HCT116 (cell line): ENCODE measurements at regions of chr17 and their contacts with region 1.

Region 1: DNA sequence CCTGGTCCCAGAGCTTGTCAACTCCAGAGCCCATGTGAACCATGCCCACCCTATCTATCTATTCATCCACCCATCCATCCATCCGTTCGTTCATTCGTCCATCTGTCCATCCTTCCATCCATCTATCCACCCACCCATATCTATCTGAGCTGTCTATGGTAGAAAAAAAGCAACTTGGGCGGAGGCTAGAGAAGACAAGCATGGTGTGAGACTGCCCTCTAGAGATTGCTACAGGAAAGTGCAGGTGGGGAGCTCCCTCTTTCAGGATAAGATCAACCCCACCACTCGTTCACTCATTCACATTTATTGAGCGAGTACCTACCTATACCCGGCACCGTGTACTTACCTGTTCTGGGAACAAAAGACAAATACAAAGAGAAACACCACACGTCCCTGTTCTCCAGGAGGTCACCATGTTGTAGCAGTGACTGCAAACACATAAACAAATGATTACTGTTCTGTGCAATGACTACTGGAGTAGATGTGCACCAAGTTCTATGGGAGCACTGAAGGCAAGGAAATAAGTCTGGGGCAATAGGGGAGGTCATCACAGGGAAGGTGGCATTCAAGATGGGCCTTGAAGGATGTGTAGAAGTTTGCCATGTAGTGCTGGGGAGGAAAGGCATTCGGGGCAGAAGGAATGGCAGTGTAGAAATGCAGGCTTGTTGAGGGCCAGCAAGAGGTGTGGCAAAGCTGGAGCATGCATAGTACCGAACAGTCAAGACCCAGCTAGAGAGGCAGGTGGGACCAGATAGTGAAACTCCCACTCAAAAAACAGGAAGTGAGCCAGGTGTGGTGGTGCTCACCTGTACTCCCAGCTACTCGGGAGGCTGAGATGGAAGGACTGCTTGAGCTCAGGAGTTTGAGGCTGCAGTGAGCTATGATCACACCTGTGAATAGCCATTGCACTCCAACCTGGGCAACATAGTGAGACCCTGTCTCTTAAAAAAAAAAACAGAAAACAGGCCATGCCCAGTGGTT is 13.4 kb upstream of the ATP5MC1 start:
- DNase-seq: peak; percentile 82
- ATAC-seq: peak; percentile 93
- H3K4me3 ChIP-seq: no peak overlapping the region
- H3K27ac ChIP-seq: no peak overlapping the region
- H3K4me1 ChIP-seq: peaks cover 0 to 2% of the 10 kb centered on the region in 2 experiments; a peak in 1 of 4 replicates
- H3K27me3 ChIP-seq: no peaks in the 10 kb centered on the region
- CTCF ChIP-seq: peak; percentile 97 to 100 (median 99)
- POLR2A ChIP-seq: no peak
- RAD21 ChIP-seq: peak; percentile 100

Region 2: DNA sequence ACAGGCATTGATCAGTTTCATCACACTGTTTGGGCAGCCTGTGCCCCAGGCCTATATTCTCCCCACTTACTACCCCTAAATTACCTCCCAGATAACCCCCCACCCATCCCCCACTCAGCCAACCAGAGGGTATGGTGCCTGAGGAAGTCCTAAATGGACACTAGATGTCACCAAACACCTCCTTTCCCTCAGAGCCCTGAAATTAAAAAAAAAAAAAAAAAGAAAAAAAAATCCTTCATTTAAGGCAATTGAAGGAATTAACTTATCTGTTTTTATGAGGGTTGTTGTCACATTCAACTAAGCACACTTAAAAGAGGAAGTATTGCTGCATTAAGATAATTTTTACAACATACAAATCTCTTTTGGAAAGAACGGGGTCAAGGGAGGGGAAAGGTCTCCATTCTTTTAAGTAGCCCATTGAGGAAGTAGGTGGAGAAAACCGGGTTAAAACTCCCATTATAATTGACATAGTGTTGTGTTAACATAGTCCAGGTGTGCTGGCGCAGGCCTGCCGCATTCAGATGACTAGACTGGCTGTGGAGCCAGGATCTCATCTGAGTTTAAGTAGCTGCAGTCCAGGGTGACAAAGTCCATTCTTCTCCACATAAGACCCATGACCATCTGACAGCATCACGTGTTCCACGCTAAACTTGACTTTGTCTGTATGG is 725.4 kb before region 1 on chr17:
- CTCF ChIA-PET with region 1: interaction called, 4 read pairs
- POLR2A ChIA-PET with region 1: no interaction called
- RAD21 ChIA-PET with region 1: no interaction called
- intact Hi-C with region 1: loop called (anchors 10 kb)
- DNase-seq: peak; percentile 45
- ATAC-seq: peak; percentile 95
- H3K4me3 ChIP-seq: no peak overlapping the region
- H3K27ac ChIP-seq: no peak overlapping the region
- H3K4me1 ChIP-seq: peaks cover 3 to 6% of the 10 kb centered on the region in 2 experiments; a peak in 3 of 4 replicates
- H3K27me3 ChIP-seq: peaks cover 25% of the 10 kb centered on the region; the same call in 1 of the 2 replicates
- CTCF ChIP-seq: peak; percentile 80 to 87 (median 83)
- POLR2A ChIP-seq: no peak
- RAD21 ChIP-seq: peak; percentile 86

Region 3: DNA sequence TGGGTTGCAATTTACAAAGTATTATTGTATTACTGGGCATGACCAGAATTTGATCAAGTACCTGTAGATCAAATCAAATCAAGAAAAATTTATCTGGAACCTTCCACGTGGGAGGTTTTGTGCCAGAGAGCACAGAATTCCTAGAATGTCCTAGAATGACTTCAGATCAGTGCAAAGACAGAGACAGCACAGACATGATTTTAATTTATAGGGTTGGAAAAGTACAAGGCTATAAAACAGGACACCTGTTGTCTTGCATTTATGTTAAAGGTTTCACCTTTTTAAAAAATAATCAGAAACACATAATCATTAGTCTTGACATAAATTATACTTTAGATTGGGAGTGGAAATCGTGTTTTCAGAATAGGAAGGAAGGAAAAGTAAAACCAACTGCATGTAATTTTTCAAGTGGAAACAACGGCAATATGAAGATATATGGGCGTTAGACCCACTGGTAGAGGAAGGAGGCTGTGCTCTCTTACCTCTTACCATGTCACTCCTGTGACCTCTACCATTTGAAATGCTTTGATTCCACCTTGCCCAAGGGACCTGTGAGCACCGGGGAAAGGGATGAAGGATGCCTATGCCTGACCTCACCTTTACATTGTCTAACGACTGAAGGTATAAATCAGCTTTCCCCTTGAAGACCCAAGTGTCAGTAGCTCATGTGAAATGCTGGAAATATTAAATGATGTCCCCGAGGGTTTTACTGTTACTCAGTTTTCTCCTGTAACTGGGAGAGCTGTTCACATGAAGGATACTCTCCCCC is 671.2 kb before region 1 on chr17:
- CTCF ChIA-PET with region 1: no interaction called
- POLR2A ChIA-PET with region 1: no interaction called
- RAD21 ChIA-PET with region 1: no interaction called
- intact Hi-C with region 1: no loop called
- DNase-seq: no peak
- ATAC-seq: no peak
- H3K4me3 ChIP-seq: no peak overlapping the region
- H3K27ac ChIP-seq: peak overlapping the region; percentile 48; the same call in 1 of the 2 replicates
- H3K4me1 ChIP-seq: peaks cover 8 to 36% of the 10 kb centered on the region in 2 experiments; a peak in 3 of 4 replicates
- H3K27me3 ChIP-seq: no peaks in the 10 kb centered on the region
- CTCF ChIP-seq: no peak
- POLR2A ChIP-seq: no peak
- RAD21 ChIP-seq: no peak

Region 4: GRCh38 chr17:48478224-48479013 is 400.8 kb before region 1 on chr17:
- CTCF ChIA-PET with region 1: no interaction called
- POLR2A ChIA-PET with region 1: no interaction called
- RAD21 ChIA-PET with region 1: no interaction called
- intact Hi-C with region 1: no loop called
- DNase-seq: no peak
- ATAC-seq: no peak
- H3K4me3 ChIP-seq: no peak overlapping the region
- H3K27ac ChIP-seq: no peak overlapping the region
- H3K4me1 ChIP-seq: peaks cover 22 to 39% of the 10 kb centered on the region in 2 experiments
- H3K27me3 ChIP-seq: no peaks in the 10 kb centered on the region
- CTCF ChIP-seq: no peak
- POLR2A ChIP-seq: no peak
- RAD21 ChIP-seq: no peak

Region 5: GRCh38 chr17:48678141-48678971 is 200.9 kb before region 1 on chr17:
- CTCF ChIA-PET with region 1: interaction called, 221 read pairs
- POLR2A ChIA-PET with region 1: interaction called, 3 read pairs
- RAD21 ChIA-PET with region 1: interaction called, 28 to 29 read pairs
- intact Hi-C with region 1: loop called (anchors 2 kb)
- DNase-seq: peak; percentile 28
- ATAC-seq: peak; percentile 97
- H3K4me3 ChIP-seq: peak overlapping the region; percentile 12 to 26; a peak in 2 of 4 replicates
- H3K27ac ChIP-seq: peak overlapping the region; percentile 12; the same call in 1 of the 2 replicates
- H3K4me1 ChIP-seq: peaks cover 0 to 13% of the 10 kb centered on the region in 2 experiments; a peak in 2 of 4 replicates
- H3K27me3 ChIP-seq: no peaks in the 10 kb centered on the region
- CTCF ChIP-seq: peak; percentile 99 to 100 (median 99)
- POLR2A ChIP-seq: no peak
- RAD21 ChIP-seq: peak; percentile 98

Region 6: DNA sequence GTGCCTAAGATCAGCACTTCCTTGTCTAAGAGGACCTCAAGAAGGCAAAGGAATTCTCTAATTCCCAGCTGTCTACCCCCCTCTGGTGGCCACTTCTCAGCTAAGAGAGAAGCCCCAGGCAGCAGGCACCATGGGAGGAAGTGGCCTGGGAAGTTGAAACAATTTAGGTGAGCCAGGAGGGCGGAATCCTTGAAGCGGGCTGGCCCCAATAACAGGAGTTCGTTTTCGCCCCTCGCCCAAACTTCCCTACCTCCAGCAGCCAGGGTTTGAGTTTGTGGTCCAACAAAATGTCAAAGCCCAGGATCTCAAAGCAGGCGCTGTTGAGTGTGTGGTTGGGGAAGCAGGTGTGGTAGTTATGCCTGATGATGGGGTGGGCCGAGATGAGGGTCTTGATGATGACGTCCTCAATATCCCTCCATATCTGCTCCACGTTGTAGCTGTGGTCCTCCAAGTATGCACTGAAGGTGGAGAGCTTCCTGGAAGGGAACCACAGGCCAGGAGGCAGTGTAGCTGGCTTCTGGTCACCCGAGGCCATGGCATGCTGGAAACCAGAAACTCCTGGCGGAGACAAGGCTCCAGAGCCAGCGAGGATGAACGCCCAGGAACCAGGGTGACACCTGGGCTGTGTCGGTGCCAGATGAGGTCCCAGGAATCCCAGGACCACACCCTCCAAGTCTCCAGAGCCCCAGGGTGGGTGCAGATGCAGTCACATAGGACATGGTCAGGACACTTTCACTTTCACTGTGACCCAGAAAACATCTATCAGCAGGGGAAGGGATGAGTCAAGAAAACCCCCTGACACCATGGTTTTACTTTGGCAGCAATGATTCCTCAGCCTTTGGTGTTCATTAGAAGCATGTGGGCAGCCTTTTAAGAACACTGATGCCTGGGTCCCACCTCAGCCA is 87.8 kb before region 1 on chr17:
- CTCF ChIA-PET with region 1: interaction called, 14 read pairs
- POLR2A ChIA-PET with region 1: no interaction called
- RAD21 ChIA-PET with region 1: interaction called, 5 read pairs
- intact Hi-C with region 1: no loop called
- DNase-seq: peak; percentile 87
- ATAC-seq: peak; percentile 92
- H3K4me3 ChIP-seq: no peak overlapping the region
- H3K27ac ChIP-seq: no peak overlapping the region
- H3K4me1 ChIP-seq: peaks cover 12 to 32% of the 10 kb centered on the region in 2 experiments
- H3K27me3 ChIP-seq: no peaks in the 10 kb centered on the region
- CTCF ChIP-seq: peak; percentile 94 to 98 (median 98)
- POLR2A ChIP-seq: no peak
- RAD21 ChIP-seq: peak; percentile 97

Region 7: GRCh38 chr17:48816774-48817590 is 62.2 kb before region 1 on chr17 and contains the start of gene TTLL6:
- CTCF ChIA-PET with region 1: interaction called, 237 read pairs
- POLR2A ChIA-PET with region 1: interaction called, 6 read pairs
- RAD21 ChIA-PET with region 1: interaction called, 14 to 40 read pairs
- intact Hi-C with region 1: loop called (anchors 1 kb)
- DNase-seq: peak; percentile 89
- ATAC-seq: peak; percentile 98
- H3K4me3 ChIP-seq: peak within 1 kb of the TSS; percentile 41 to 59
- H3K27ac ChIP-seq: no peak within 1 kb of the TSS; the same call in 1 of the 2 replicates
- H3K4me1 ChIP-seq: peaks cover 9 to 17% of the 10 kb centered on the region in 2 experiments
- H3K27me3 ChIP-seq: no peaks in the 10 kb centered on the region
- CTCF ChIP-seq: no peak
- POLR2A ChIP-seq: no peak
- RAD21 ChIP-seq: no peak
- total RNA-seq, gene TTLL6: 0.79 TPM

Region 8: DNA sequence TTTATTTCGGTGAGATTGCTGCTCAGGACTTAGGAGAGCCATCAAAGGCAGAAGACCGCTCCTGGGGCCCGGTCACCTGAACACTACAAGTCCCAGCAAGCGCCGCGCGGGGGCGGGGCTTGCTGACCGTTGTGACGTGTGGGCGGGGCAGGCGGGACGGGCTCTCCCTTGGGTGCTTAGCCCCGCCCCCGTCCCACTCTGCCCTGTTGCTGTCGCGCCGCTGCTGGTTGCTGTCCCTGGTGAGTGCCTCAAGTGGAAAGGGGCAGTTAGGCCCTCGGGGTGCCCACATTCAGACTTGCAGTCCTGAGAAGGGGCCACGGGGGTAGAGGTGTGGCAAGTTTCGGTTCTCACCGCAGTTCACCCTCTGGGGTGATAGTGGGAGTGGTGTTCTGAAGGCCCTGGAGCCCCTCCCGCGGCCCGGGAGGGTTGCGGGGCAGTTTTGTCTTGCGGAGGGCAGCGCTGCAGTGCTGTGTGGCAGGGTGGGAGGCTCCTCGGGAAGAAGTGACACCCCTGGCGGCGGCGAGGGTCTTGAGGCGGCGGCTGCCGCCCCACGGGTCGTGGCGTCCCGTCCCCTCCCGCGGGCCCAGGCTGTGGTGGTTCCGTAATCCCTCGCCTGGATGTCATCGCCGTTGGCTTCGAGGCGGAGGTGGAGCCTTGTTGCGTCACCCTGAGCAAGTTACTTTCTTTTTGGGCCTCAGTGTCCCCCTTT is 48.2 kb before region 1 on chr17 and contains the start of gene CALCOCO2:
- CTCF ChIA-PET with region 1: interaction called, 10 read pairs
- POLR2A ChIA-PET with region 1: no interaction called
- RAD21 ChIA-PET with region 1: no interaction called
- intact Hi-C with region 1: no loop called
- DNase-seq: peak; percentile 94
- ATAC-seq: peak; percentile 98
- H3K4me3 ChIP-seq: peak within 1 kb of the TSS; percentile 85 to 91
- H3K27ac ChIP-seq: peak within 1 kb of the TSS; percentile 66
- H3K4me1 ChIP-seq: peaks cover 5 to 32% of the 10 kb centered on the region in 2 experiments; a peak in 2 of 4 replicates
- H3K27me3 ChIP-seq: no peaks in the 10 kb centered on the region
- CTCF ChIP-seq: peak in 2 of 3 experiments; percentile 9 to 11; a peak in 1 of 6 replicates
- POLR2A ChIP-seq: peak; percentile 74
- RAD21 ChIP-seq: no peak
- total RNA-seq, gene CALCOCO2: 151 TPM

Region 9: DNA sequence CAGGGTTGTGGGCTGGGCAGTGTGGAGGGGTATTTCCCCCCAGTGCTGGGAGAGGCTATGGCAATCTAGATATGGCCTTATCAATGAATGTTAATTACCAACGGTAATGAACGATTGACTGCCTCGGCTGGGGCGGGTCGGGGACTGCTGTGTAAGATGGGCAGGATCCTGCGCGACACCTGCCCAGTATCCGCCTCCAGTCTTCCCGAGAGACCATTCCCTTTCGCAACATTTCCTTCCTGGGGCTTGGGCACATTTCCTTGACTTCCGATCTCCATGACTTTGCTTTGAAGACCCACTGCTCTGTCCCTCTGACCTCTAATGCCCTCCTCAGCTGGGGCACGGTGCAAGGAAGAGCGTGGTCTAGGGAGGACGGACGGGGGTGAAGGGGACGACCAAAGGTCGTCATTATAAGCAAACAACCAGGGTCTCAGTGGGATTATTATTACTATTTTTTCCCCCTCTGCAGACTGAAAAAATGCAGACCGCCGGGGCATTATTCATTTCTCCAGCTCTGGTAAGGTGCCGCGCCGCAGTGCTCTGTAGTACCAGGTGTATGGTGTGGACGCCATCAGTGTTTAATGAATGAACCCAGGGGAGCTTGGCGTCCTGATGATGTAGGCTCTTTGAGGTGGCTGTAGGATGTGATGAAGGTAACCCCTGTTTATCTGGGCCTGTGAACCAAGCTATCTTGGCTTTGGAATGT is 13.9 kb after region 1 on chr17:
- CTCF ChIA-PET with region 1: interaction called, 23 read pairs
- POLR2A ChIA-PET with region 1: interaction called, 10 read pairs
- RAD21 ChIA-PET with region 1: interaction called in 1 of 2 experiments, 3 read pairs
- intact Hi-C with region 1: no loop called
- DNase-seq: no peak
- ATAC-seq: no peak
- H3K4me3 ChIP-seq: peak overlapping the region; percentile 82 to 88
- H3K27ac ChIP-seq: peak overlapping the region; percentile 73
- H3K4me1 ChIP-seq: peaks cover 11 to 26% of the 10 kb centered on the region in 2 experiments; a peak in 3 of 4 replicates
- H3K27me3 ChIP-seq: no peaks in the 10 kb centered on the region
- CTCF ChIP-seq: no peak
- POLR2A ChIP-seq: no peak
- RAD21 ChIP-seq: no peak